WTC11 (cell line): ENCODE measurements at regions of chr1 and their contacts with region 1.

Region 1: DNA sequence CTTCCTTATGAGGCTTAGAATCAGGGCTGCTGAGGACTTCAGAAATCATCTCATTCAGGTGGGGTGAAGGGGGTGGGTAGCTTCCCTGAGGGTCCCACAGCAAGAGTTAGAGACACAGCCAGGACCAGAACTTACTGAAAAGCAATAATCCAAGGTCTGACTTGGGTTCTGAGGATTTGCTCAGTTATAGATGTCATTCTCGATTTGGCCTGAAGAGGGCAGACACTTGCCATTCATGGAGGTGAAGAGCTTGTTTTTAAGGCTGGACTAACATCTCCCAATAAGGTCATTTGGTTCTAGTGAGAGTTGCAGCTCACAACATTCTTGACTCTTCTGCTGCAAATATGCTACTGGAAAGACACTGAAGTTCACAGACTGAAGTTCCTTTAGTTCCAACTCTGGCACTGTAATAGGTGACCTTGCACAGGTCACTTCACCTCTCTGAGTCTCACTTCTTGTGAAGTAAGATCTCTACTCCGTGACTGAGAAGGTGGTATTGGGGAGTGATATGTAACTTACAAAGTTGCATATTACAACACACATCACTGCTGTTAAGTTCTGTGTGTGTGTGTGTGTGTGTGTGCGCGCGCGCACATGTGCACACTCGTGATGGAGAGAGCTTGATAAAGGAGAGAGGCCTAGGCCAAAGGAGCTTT is 69.8 kb upstream of the DIRAS3 start:
- DNase-seq: peak; percentile 37
- ATAC-seq: peak; percentile 82
- H3K4me3 Mint-ChIP-seq: no peak overlapping the region
- H3K27ac Mint-ChIP-seq: 0 out of 2 replicates have a peak overlapping the region, but pooled peaks have one; percentile 35
- H3K4me1 Mint-ChIP-seq: 0 out of 2 replicates have a peak, but pooled peaks cover 5% of the 10 kb centered on the region
- H3K27me3 Mint-ChIP-seq: no peaks in the 10 kb centered on the region
- CTCF ChIP-seq: peak; percentile 68

Region 2: DNA sequence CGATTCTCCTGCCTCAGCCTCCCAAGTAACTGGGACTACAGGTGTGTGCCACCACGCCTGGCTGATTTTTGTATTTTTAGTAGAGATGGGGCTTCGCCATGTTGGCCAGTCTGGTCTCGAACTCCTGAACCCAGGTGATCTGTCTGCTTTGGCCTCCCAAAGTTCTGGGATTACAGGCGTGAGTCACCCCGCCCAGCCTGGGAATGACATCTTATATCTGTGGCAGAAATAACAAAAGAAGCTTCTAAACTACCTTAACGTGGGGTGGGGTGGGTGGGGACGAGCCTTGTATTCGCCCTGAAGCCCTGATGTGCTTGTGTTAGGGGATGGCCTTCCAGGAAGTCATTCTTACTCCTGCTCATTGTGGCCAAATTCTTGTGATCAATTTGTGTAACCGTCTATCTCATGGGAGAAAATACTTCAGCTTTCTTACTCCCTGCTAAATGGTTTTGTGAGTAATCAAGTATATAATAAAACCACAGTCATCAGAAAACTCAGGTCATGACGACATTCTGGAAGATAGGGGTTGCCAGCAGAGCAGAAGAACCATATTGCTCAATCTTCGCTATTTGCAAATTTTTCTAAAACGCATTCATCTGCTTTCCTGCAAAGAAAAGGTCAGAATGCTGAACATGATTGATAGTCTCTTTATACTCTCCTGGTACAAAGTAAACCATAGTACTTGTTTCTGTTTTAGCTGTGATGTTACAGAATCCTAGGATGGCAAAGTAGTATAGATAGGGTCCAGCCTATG is 133.0 kb before region 1 on chr1:
- CTCF ChIA-PET with region 1: no interaction called
- POLR2A ChIA-PET with region 1: no interaction called
- DNase-seq: no peak
- ATAC-seq: no peak
- H3K4me3 Mint-ChIP-seq: no peak overlapping the region
- H3K27ac Mint-ChIP-seq: no peak overlapping the region
- H3K4me1 Mint-ChIP-seq: no peaks in the 10 kb centered on the region
- H3K27me3 Mint-ChIP-seq: no peaks in the 10 kb centered on the region
- CTCF ChIP-seq: no peak

Region 3: GRCh38 chr1:68107771-68108170 is 12.5 kb before region 1 on chr1:
- CTCF ChIA-PET with region 1: interaction called, 10 read pairs
- POLR2A ChIA-PET with region 1: interaction called, 3 read pairs
- DNase-seq: no peak
- ATAC-seq: peak; percentile 57
- H3K4me3 Mint-ChIP-seq: no peak overlapping the region
- H3K27ac Mint-ChIP-seq: no peak overlapping the region
- H3K4me1 Mint-ChIP-seq: peaks cover 15% of the 10 kb centered on the region
- H3K27me3 Mint-ChIP-seq: no peaks in the 10 kb centered on the region
- CTCF ChIP-seq: no peak

Region 4: DNA sequence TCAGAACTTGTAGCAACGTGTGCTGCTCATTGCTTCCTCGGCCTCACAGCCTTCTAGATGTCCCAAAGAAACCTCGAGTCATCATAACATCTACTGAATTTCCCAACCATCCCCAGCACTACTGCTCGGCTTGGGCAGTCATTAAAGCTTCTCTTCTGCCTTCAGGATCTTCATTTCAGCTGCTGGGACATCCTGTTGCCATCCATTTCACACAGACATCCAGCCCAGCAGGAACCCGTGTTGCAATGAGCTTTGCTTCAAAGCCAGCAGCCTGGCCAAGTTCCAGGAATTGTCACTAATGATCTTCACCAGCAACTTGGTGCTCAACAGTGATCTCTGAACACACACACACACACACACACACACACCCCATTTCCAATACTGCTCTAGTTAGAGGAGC is 93.6 kb after region 1 on chr1:
- CTCF ChIA-PET with region 1: no interaction called
- POLR2A ChIA-PET with region 1: no interaction called
- DNase-seq: no peak
- ATAC-seq: no peak
- H3K4me3 Mint-ChIP-seq: no peak overlapping the region
- H3K27ac Mint-ChIP-seq: no peak overlapping the region
- H3K4me1 Mint-ChIP-seq: peaks cover 17% of the 10 kb centered on the region
- H3K27me3 Mint-ChIP-seq: no peaks in the 10 kb centered on the region
- CTCF ChIP-seq: no peak

Region 5: DNA sequence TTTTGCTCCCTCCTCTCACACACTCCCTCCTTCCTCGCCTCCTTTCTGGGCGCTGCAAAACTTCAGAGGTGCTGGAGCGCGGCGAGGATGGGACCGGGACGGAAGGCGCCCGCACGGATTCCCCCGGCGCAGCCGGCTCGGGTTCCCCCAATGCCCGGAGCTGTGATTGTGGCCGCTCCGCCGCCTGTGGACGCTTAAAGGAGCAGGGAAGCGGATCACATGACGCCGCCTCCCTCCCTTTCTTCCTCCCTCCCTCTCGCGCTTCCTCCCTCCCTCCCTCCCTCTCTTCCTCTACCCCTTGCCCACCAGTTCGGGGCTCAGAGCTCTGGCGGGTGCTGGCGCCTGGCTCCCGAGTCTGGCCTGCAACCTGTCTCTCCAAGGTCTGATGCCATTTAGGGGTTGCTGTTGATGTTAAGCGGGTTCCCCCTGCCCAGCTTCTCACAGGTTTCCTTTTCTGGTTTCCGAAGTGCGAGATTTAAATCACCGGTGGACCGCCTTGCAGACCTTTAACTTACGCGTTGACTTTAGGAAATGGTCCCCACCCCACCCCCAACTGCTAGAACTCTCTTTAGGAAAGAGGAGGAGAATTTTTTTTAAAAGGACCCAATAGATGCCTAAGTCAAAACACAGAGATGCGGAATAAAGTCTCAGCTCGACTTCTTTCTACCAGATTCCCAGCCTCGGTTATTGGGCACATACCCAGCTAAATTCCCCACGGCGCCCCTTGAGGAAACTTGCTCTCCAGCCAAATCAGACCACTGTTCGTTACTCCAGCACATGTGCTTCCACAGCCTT is 112.3 kb after region 1 on chr1 and contains the start of gene WLS:
- CTCF ChIA-PET with region 1: interaction called, 20 read pairs
- POLR2A ChIA-PET with region 1: no interaction called
- DNase-seq: peak; percentile 79
- ATAC-seq: peak; percentile 76
- H3K4me3 Mint-ChIP-seq: peak within 1 kb of the TSS; percentile 82
- H3K27ac Mint-ChIP-seq: no peak within 1 kb of the TSS
- H3K4me1 Mint-ChIP-seq: peaks cover 29% of the 10 kb centered on the region
- H3K27me3 Mint-ChIP-seq: peaks cover 98% of the 10 kb centered on the region
- CTCF ChIP-seq: no peak
- total RNA-seq, gene WLS: 4.5 to 5.7 TPM (median 5.3 TPM) in 3 replicates

Region 6: GRCh38 chr1:68321084-68321685 is 200.9 kb after region 1 on chr1:
- CTCF ChIA-PET with region 1: interaction called, 57 read pairs
- POLR2A ChIA-PET with region 1: no interaction called
- DNase-seq: peak; percentile 73
- ATAC-seq: peak; percentile 90
- H3K4me3 Mint-ChIP-seq: no peak overlapping the region
- H3K27ac Mint-ChIP-seq: no peak overlapping the region
- H3K4me1 Mint-ChIP-seq: peaks cover 13% of the 10 kb centered on the region
- H3K27me3 Mint-ChIP-seq: no peaks in the 10 kb centered on the region; the same call in 1 of the 2 replicates
- CTCF ChIP-seq: no peak

Region 7: DNA sequence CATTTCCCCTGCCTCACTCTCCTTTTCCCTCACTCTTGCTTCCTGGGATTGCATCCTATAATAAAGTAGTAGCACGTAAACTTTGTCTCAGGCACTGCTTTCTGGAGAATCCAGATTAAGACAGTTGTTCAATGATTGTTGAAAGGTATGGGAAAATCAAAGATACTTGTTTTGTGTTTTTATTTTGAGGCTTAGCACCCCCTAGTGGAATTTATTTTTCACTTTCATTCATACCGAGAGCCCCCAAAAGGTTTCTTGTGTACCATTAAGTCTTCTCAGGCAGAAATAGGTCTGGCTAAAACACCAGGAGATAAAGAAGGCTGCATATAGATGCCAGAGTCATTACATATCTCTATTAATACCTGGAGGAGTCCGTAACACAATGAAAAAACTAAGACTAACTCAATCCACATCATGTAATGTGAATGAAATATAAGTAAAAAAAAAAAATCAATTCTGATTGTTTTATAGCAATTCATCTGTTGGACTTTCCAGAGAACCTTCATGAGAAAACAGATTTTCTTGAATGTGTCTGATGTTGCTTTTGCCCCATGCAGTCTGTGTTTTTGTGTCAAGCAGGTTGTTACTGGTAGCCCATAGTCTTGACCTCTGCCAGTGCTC is 226.0 kb after region 1 on chr1:
- CTCF ChIA-PET with region 1: interaction called, 75 read pairs
- POLR2A ChIA-PET with region 1: interaction called, 5 read pairs
- DNase-seq: no peak
- ATAC-seq: no peak
- H3K4me3 Mint-ChIP-seq: no peak overlapping the region
- H3K27ac Mint-ChIP-seq: no peak overlapping the region
- H3K4me1 Mint-ChIP-seq: 0 out of 2 replicates have a peak, but pooled peaks cover 2% of the 10 kb centered on the region
- H3K27me3 Mint-ChIP-seq: no peaks in the 10 kb centered on the region
- CTCF ChIP-seq: peak; percentile 29; the same call in 1 of the 2 replicates